ENCODE measurements at regions of chr22 and their contacts with region 1.

Region 1: GRCh38 chr22:40436505-40437451 is 66.4 kb downstream of the SGSM3 start:
- DNase-seq: peak in 4 of 10 donors; percentile 15 to 76 (median 72)
- ATAC-seq: peak; percentile 70 to 80
- H3K4me3 Mint-ChIP-seq: peak overlapping the region; percentile 45 to 72 (median 56)
- H3K27ac Mint-ChIP-seq: peak overlapping the region; percentile 75 to 93 (median 88)
- H3K4me1 Mint-ChIP-seq: peaks cover 22 to 97% (median 67%) of the 10 kb centered on the region in 4 donors
- H3K27me3 Mint-ChIP-seq: no peaks in the 10 kb centered on the region

Region 2: DNA sequence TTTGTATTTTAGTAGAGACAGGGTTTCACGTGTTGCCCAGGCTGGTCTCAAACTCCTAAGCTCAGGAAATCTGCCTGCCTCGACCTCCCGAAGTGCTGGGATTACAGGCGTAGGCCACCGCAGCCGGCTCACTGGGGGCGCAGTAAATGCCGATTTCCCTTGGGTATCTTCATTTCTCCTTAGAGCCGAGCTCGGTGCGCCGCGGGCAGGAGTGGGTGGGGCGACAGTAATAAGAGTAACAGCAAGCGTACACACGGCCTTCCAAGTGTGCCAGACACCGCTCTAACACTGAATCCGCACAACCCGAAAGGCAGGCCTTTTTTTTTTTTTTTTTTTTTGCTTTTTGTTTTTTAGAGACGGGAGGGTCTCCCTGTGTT is 91.0 kb before region 1 on chr22:
- POLR2A ChIA-PET with region 1: no interaction called
- DNase-seq: peak in 9 of 10 donors; percentile 6 to 75 (median 51)
- ATAC-seq: peak; percentile 58 to 60
- H3K4me3 Mint-ChIP-seq: peak overlapping the region; percentile 91 to 99 (median 97)
- H3K27ac Mint-ChIP-seq: peak overlapping the region; percentile 95 to 99 (median 98)
- H3K4me1 Mint-ChIP-seq: peaks cover 28 to 71% (median 52%) of the 10 kb centered on the region in 4 donors
- H3K27me3 Mint-ChIP-seq: no peaks in the 10 kb centered on the region

Region 3: GRCh38 chr22:40463017-40463631 is 26.3 kb after region 1 on chr22:
- POLR2A ChIA-PET with region 1: interaction called, 11 read pairs
- DNase-seq: peak in 9 of 10 donors; percentile 12 to 73 (median 49)
- ATAC-seq: peak; percentile 83 to 85
- H3K4me3 Mint-ChIP-seq: peak overlapping the region; percentile 81 to 99 (median 98)
- H3K27ac Mint-ChIP-seq: peak overlapping the region; percentile 94 to 99 (median 96)
- H3K4me1 Mint-ChIP-seq: peaks cover 33 to 77% (median 70%) of the 10 kb centered on the region in 4 donors
- H3K27me3 Mint-ChIP-seq: no peaks in the 10 kb centered on the region

Region 4: DNA sequence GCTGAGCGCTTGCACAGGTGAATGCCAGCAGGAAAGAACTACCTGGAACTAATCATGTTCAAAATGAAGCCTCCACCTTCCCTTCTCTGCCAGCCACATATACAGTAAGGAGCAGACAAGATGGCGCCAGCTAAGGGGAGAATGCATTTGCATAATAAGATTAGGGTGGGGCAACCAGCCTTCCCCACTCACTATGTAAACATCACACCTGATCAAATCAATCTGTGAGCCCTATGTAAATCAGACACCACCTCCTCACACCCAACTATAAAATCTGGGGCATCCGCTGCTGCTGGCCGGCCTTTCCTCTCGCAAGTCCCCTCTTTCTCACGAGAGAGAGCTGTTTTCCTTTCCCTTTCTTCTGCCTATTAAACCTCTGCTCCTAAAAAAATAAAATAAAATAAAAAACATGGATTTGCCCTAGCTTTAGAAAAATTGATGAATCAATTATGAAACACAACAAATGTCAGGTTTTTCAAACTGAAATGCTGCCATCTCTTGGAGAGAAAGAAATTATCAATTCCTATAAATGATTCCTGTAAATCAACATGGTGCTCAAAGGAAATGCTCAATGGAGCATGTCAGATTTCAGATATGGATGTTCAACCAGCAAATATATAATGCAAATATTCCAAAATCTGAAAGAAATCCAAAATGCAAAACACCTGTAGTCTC is 42.5 kb after region 1 on chr22:
- POLR2A ChIA-PET with region 1: interaction called, 23 read pairs
- DNase-seq: no peak
- ATAC-seq: no peak
- H3K4me3 Mint-ChIP-seq: no peak overlapping the region
- H3K27ac Mint-ChIP-seq: peak overlapping the region in 7 of 10 donors; percentile 19 to 74 (median 52)
- H3K4me1 Mint-ChIP-seq: peaks cover 8 to 47% (median 44%) of the 10 kb centered on the region in 4 donors
- H3K27me3 Mint-ChIP-seq: no peaks in the 10 kb centered on the region

Region 5: GRCh38 chr22:40487663-40488249 is 51.0 kb after region 1 on chr22:
- POLR2A ChIA-PET with region 1: interaction called, 23 read pairs
- DNase-seq: peak in 4 of 10 donors; percentile 10 to 48 (median 40)
- ATAC-seq: peak; percentile 57 to 67
- H3K4me3 Mint-ChIP-seq: no peak overlapping the region
- H3K27ac Mint-ChIP-seq: peak overlapping the region in 3 of 10 donors; percentile 2 to 17 (median 6)
- H3K4me1 Mint-ChIP-seq: peaks cover 14 to 50% (median 45%) of the 10 kb centered on the region in 4 donors
- H3K27me3 Mint-ChIP-seq: no peaks in the 10 kb centered on the region

Region 6: DNA sequence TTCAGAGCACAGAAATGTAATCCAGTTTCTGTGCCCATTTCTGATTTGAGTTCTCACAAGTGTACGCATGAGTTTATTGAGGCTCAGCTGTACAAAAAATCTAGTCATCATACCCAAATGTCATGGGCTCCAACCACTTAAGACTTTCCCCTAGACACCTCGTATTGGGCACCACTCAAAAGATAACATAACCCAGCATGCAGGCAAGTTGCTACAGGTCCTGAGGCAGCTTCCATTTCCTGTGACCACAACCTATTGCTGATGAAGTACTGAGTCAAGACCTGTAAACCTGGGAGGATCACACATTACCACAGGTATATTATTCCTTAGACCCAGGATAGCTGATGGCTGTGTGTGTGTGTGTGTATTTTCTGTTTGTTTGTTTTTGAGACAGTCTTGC is 104.5 kb after region 1 on chr22:
- POLR2A ChIA-PET with region 1: no interaction called
- DNase-seq: no peak
- ATAC-seq: no peak
- H3K4me3 Mint-ChIP-seq: no peak overlapping the region
- H3K27ac Mint-ChIP-seq: peak overlapping the region in 5 of 10 donors; percentile 4 to 48 (median 13)
- H3K4me1 Mint-ChIP-seq: peaks cover 10 to 33% (median 28%) of the 10 kb centered on the region in 4 donors
- H3K27me3 Mint-ChIP-seq: no peaks in the 10 kb centered on the region

Region 7: GRCh38 chr22:40572976-40573375 is 136.2 kb after region 1 on chr22:
- POLR2A ChIA-PET with region 1: no interaction called
- DNase-seq: no peak
- ATAC-seq: no peak
- H3K4me3 Mint-ChIP-seq: no peak overlapping the region
- H3K27ac Mint-ChIP-seq: peak overlapping the region in 4 of 10 donors; percentile 9 to 55 (median 26)
- H3K4me1 Mint-ChIP-seq: peaks cover 10 to 19% (median 18%) of the 10 kb centered on the region in 4 donors
- H3K27me3 Mint-ChIP-seq: no peaks in the 10 kb centered on the region